ENCODE measurements at regions of chr7 and their contacts with region 1.

Region 1: DNA sequence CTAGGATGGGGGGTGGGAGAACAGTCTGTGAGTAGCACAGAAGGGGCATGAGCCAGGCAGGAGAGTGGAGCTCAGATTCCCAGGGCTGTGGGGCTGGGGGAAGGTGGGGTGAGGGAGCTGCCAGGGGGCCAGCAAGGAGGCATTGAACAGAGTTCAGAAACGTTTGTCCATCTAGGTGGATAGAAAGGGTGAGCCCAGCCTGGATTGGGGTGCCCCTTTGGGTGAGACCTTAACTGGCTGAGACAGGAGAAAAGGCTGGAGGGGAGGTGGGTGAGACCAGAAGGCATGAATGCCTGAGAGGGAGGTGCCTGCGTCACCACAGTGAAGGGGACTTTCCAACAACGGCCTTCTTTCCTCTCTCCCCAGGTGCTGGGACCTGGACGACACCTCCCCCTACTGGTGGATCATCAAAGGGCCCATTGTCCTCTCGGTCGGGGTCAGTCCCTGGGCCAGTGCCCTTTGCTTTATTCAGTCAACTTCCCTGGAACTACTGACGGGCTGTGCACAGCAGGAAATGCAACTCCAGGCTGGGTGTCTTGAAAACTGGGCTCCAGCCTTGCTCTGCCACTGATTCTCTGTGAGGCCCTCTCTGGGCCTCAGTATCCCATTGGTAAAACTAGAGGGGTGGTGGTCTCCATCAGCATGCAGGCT is 11.0 kb downstream of the GHRHR start:
- DNase-seq: peak; percentile 93
- CTCF ChIP-seq: peak; percentile 69

Region 2: GRCh38 chr7:30800785-30801252 is 173.9 kb before region 1 on chr7:
- in situ Hi-C with region 1: loop called (anchors 5 kb)
- DNase-seq: peak; percentile 76
- CTCF ChIP-seq: peak; percentile 75

Measured in GM13976 (cell line).